Psoas muscle (tissue), 8 donors: ENCODE measurements at regions of chr4 and their contacts with region 1.

Region 1: DNA sequence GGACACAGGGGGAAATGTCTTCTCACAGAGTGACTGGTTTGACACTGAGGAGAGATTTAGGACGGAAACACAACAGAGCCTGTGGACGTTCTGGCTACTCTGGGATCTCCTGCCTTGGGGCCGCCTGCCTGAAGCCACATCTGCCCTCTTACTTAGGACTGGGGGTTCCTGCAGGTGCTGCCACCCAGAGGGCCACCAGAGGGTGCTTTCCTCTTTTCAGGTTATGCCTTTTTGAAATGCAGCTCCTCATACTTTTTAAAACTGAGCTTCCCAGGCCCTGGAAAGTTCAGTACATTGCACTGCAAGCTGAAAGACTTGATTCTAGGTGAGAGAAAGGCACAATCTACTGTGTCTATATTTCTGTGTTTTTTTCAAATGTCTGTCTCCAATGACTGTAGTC is 92.2 kb upstream of the PGRMC2 start:
- DNase-seq: peak; percentile 26 to 57
- ATAC-seq: peak; percentile 73 to 89 (median 82)
- H3K4me3 ChIP-seq: no peak overlapping the region
- H3K27ac ChIP-seq: no peak overlapping the region
- H3K4me1 ChIP-seq: peaks cover 7% of the 10 kb centered on the region
- H3K27me3 ChIP-seq: no peaks in the 10 kb centered on the region
- CTCF ChIP-seq: peak; percentile 53

Region 2: DNA sequence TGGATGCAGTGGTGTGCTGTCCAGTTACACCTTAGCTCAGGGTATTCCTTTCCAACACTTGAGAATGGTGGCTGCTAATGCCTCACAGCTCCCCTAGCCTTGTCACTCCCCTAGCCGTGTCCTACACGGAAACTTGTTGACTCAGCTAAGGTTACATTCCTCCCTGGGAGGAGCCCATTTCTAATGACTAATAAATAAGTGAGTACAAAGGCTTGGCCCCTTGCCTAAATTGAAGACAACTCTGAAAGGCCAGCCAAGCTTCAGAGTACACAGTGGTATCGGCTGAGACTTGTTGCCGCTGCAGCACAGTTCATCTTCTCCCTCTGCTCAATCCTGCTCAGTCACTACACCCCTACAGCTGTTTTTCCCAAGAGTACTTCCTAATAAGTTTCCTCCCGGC is 670.9 kb before region 1 on chr4:
- intact Hi-C with region 1: no loop called
- DNase-seq: no peak
- ATAC-seq: peak; percentile 44 to 83 (median 80)
- H3K4me3 ChIP-seq: no peak overlapping the region
- H3K27ac ChIP-seq: no peak overlapping the region
- H3K4me1 ChIP-seq: no peaks in the 10 kb centered on the region
- H3K27me3 ChIP-seq: no peaks in the 10 kb centered on the region
- CTCF ChIP-seq: no peak

Region 3: DNA sequence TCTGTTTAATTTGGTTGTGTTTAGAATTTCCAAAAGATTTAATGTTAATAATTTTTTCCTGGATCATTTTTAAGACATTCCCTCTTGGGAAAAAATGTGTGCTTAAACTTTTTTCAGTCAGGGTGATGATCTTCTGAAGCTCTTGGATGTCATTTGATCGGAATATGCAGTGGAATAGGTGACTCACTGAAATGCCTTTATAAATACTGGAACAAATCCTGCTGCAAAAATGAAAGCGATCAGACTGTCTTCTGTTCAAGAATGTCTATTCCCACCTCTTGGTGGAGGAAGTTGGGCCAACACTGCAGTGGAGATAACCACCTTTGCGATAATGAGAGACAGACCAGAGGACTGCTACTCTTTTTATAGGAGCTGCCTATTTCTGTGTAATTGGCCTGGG is 272.1 kb before region 1 on chr4:
- intact Hi-C with region 1: loop called in 1 of 2 experiments (anchors 2 kb)
- DNase-seq: no peak
- ATAC-seq: no peak
- H3K4me3 ChIP-seq: no peak overlapping the region
- H3K27ac ChIP-seq: no peak overlapping the region
- H3K4me1 ChIP-seq: no peaks in the 10 kb centered on the region
- H3K27me3 ChIP-seq: no peaks in the 10 kb centered on the region
- CTCF ChIP-seq: no peak

Region 4: GRCh38 chr4:128424527-128425497 is 45.0 kb after region 1 on chr4:
- intact Hi-C with region 1: no loop called
- DNase-seq: no peak
- ATAC-seq: peak in 2 of 4 donors; percentile 51 to 63
- H3K4me3 ChIP-seq: no peak overlapping the region
- H3K27ac ChIP-seq: no peak overlapping the region
- H3K4me1 ChIP-seq: peaks cover 14% of the 10 kb centered on the region
- H3K27me3 ChIP-seq: no peaks in the 10 kb centered on the region
- CTCF ChIP-seq: no peak

Region 5: DNA sequence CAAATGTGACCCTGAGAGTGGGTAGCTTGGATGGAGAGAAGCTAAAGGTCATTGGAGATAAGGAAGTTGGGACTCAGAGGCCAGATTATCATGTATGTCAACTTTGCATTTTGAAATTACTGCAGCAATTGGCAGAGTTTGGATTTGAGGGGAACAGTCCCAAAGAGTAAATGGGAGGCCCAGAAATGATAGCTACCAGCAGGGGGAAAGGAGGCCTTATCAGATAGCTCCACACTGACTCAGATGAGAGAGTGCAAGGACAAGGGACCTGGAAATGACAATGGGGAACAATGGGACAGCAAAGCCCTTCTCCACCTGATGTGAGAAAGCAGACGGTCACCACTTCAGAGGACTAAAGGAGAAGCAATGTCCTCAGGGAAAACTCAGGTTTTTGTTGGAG is 228.1 kb after region 1 on chr4:
- intact Hi-C with region 1: no loop called
- DNase-seq: no peak
- ATAC-seq: no peak
- H3K4me3 ChIP-seq: no peak overlapping the region
- H3K27ac ChIP-seq: no peak overlapping the region
- H3K4me1 ChIP-seq: peaks cover 11% of the 10 kb centered on the region
- H3K27me3 ChIP-seq: no peaks in the 10 kb centered on the region
- CTCF ChIP-seq: no peak

Region 6: DNA sequence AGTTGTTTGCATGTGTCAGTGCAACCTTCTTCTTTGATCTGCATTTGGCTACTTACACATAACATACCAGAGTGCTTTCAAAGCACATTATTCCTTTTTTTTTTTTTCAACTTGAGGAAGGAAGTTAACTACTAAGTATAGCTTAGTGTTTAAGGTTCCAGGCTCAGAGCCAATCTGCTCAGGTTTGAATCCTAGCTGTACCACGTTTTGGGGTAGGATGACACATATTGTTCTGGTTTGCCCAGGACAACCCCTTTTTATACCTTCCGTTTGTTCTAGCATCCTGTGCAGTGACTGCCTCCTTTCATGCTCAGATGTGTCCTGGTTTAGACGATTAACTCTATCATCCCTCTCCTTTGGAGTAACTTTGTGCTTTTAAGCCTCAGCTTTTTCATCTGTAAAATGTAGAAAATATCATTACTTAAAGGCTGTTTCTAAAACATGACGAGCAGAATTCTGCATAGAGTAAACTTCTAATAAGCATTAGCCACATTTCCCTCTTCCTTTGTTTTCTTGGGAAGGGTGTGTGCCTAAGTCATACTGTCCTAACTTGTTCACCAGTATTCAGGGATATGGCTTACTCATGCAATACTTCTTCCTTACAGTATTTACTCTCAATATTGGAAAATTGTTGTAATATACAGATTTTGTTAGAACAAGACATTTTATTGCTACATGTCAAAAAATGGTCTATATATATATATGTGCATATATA is 997.4 kb after region 1 on chr4:
- intact Hi-C with region 1: no loop called
- DNase-seq: no peak
- ATAC-seq: no peak
- H3K4me3 ChIP-seq: no peak overlapping the region
- H3K27ac ChIP-seq: no peak overlapping the region
- H3K4me1 ChIP-seq: no peaks in the 10 kb centered on the region
- H3K27me3 ChIP-seq: no peaks in the 10 kb centered on the region
- CTCF ChIP-seq: no peak